Posterior vena cava (tissue), 2 donors: ENCODE measurements at regions of chr19 and their contacts with region 1.

Region 1: GRCh38 chr19:38831142-38831605 is 420 bp downstream of the ECH1 start:
- DNase-seq: peak; percentile 87

Region 2: DNA sequence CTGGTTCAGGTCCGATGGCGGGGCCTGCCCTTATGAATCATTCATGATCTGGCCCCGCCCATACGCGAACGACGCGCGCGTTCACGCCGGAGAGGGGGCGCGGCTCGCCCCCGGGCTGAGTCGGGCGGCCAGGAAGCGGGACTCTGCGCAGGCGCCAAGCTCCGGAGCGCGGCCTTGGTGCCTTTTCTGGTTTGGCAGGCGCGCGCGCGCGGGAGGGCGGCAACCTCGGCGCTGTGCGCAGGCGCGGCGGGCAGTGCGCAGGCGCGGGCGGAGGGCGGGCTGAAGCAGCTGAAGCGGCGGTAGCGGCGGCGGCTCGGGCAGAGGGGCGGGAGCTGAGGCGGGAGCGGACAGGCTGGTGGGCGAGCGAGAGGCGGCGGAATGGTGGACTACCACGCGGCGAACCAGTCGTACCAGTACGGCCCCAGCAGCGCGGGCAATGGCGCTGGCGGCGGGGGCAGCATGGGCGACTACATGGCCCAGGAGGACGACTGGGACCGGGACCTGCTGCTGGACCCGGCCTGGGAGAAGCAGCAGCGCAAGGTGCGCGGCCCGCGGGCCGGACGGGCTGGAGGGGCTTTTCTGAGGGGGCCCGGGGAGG is 183.7 kb before region 1 on chr19 and contains the start of gene ACTN4:
- intact Hi-C with region 1: loop called in 1 of 2 experiments (anchors 10 kb)
- DNase-seq: peak; percentile 100
- total RNA-seq, gene ACTN4: 661 to 878 TPM

Region 3: GRCh38 chr19:38718747-38719543 is 112.2 kb before region 1 on chr19:
- intact Hi-C with region 1: no loop called
- DNase-seq: no peak

Region 4: GRCh38 chr19:38729653-38730469 is 101.3 kb before region 1 on chr19:
- intact Hi-C with region 1: loop called in 1 of 2 experiments (anchors 10 kb)
- DNase-seq: no peak

Region 5: DNA sequence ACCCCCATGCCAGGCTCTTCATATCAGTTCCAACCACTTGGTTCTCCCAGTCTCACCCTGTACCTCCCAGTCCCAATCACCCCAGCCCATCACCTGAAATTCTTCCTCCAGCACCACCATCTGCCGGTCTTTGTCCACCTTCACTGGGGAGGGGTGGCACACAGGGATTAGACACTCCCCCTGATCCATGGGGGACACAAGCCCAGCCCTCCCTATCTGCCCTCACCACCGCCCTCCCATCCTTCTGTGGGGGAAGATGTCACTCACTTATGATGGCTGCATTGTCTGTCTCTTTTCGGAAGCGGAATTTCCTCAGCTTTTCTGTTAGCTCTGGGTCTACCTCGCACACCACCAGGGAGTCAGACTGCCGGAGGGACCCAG is 504.0 kb after region 1 on chr19:
- intact Hi-C with region 1: loop called in 1 of 2 experiments (anchors 10 kb)
- DNase-seq: no peak

Region 6: DNA sequence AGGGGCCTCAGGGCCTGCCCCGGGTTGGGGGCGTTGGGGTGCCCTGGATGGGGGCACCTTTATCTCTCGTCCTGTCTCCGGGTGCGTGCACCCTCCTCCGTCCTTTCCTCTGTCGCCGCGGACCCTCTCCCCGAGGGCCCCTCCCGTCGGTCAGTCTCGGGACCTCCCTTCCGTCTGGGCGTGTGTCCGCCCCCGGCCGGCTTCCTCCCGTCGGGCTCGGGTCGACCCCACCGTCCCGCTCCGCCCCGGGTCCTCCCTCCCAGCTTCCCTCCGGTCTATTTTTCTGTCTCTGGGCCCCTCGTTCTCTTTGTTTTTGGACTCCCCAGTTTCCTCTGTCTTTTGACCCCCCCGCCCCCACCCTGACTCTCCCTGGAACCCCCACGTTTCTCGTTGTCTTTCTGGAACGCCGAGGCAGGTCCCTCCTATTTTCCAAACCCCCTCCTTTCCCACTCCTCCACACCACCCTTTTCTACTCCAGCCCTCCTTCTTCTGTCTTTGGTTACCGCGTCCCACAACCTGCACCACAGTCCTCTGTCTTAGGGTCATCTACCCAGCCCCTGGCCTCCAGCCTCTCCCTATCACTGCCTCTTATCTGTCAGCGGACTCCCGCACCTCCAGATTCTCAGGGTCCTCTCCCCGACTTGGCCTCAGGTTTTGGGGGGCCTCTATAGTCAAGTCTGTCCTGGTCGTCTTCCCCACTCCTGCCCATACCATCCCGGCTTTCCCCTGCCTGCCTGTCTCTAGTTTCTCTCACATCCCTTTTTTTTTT is 1968.6 kb after region 1 on chr19:
- intact Hi-C with region 1: loop called in 1 of 2 experiments (anchors 5 kb)
- DNase-seq: peak; percentile 91